B cell (primary cell): ENCODE measurements at regions of chr19 and their contacts with region 1.

Region 1: DNA sequence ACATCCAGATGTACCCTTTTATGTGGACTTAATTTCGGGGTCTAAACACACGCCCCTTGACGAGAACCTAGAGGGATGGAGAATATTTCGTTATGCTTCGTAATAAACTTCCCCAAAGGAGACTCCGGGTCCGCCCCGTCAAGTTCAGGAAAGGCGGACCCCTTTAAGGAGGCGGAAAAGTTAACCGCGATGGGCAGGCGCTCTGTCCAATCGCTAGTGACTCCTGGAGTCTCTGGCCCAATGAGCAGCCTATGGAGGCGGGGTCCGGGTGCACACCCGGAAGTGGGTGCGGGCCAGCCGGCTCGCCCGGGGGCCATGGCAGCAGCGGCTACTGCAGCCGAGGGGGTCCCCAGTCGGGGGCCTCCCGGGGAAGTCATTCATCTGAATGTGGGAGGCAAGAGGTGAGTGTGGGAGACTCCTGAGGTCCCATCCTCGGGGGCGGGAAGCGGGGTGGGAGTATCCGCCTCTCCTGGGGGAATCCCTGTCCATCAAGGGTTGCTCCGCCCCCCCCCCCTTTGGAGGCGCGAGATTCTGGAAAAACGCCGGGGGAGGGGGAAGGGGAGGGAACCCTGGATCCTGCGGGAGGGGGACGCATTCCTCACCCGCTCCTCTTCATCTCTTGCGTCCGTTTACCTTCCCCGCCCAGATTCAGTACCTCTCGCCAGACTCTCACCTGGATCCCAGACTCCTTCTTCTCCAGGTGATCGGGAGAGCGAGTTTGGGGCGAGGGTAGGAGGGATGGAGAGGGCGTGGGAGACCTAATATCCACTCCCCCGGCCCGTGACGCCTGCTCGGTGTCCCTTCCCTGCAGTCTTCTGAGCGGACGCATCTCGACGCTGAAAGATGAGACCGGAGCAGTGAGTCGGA is at the start of gene SHKBP1:
- DNase-seq: peak; percentile 96
- ATAC-seq: peak; percentile 98
- H3K4me3 ChIP-seq: peak within 1 kb of the TSS; percentile 52 to 90 (median 88)
- H3K4me3 Mint-ChIP-seq: peak within 1 kb of the TSS; percentile 83
- H3K27ac ChIP-seq: peak within 1 kb of the TSS; percentile 68 to 77
- H3K27ac Mint-ChIP-seq: peak within 1 kb of the TSS; percentile 89
- H3K4me1 ChIP-seq: peaks cover 18 to 42% of the 10 kb centered on the region in 2 donors
- H3K4me1 Mint-ChIP-seq: peaks cover 34% of the 10 kb centered on the region
- H3K27me3 ChIP-seq: no peaks in the 10 kb centered on the region
- H3K27me3 Mint-ChIP-seq: no peaks in the 10 kb centered on the region
- CTCF ChIP-seq: no peak
- total RNA-seq, gene SHKBP1: 179 and 192 TPM in 2 replicates

Region 2: GRCh38 chr19:39833464-39834286 is 743.1 kb before region 1 on chr19 and contains the start of gene DYRK1B:
- CTCF ChIA-PET with region 1: no interaction called
- POLR2A ChIA-PET with region 1: no interaction called
- intact Hi-C with region 1: loop called (anchors 5 kb)
- DNase-seq: peak; percentile 99
- ATAC-seq: peak; percentile 84
- H3K4me3 ChIP-seq: peak within 1 kb of the TSS; percentile 66 to 100 (median 98)
- H3K4me3 Mint-ChIP-seq: peak within 1 kb of the TSS; percentile 87
- H3K27ac ChIP-seq: peak within 1 kb of the TSS; percentile 94 to 99
- H3K27ac Mint-ChIP-seq: peak within 1 kb of the TSS; percentile 92
- H3K4me1 ChIP-seq: peaks cover 16 to 26% of the 10 kb centered on the region in 2 donors
- H3K4me1 Mint-ChIP-seq: peaks cover 32% of the 10 kb centered on the region
- H3K27me3 ChIP-seq: no peaks in the 10 kb centered on the region
- H3K27me3 Mint-ChIP-seq: no peaks in the 10 kb centered on the region
- CTCF ChIP-seq: no peak
- total RNA-seq, gene DYRK1B: 36.6 and 44.4 TPM in 2 replicates

Region 3: DNA sequence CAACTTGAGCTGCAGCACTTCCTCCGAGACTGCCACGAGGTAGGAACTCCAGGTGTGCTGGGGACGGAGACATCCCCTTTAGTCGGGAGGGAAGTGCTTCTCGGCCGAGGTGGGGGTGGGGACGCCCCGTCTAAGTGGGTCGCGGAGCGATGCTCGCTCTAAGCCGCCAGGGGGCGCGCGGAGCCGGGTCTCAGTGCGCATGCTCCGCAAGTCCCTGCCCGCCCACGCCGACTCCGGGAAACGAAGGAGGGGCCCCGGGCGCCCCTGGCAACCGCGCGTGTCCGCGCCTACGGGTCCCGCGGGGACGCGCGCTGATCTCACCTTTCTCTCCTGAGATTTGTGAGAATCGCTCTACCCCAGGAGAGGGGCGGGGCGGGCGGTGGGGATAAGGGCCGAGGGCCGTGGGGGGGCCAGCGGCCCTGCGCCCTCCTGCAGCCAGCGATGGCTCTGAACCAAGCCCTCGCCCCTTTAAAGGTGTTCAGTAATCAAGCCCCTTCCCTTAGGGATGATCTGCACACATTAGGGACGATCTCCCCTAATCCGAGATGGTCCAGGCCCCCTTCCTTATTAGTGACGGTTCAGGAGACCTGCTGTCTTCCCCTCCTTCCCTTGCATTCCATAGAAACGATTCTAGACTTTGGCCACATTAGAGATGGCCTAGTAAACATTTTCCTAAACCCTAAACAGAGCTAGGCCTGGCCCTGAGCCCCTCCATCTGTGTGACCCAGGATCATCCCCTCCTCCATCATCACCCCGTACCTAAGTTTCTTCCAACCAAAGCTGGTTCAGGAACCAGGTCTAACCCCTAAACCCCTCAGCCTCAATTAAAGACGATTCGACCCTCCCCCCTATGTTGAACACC is 47.5 kb before region 1 on chr19:
- CTCF ChIA-PET with region 1: no interaction called
- POLR2A ChIA-PET with region 1: no interaction called
- intact Hi-C with region 1: loop called (anchors 1 kb)
- DNase-seq: peak; percentile 95
- ATAC-seq: peak; percentile 91
- H3K4me3 ChIP-seq: peak overlapping the region; percentile 9 to 69 (median 41)
- H3K4me3 Mint-ChIP-seq: peak overlapping the region; percentile 82
- H3K27ac ChIP-seq: no peak overlapping the region
- H3K27ac Mint-ChIP-seq: peak overlapping the region; percentile 64
- H3K4me1 ChIP-seq: peaks cover 13 to 14% of the 10 kb centered on the region in 2 donors
- H3K4me1 Mint-ChIP-seq: peaks cover 13% of the 10 kb centered on the region
- H3K27me3 ChIP-seq: peaks cover 0 to 35% (median 18%) of the 10 kb centered on the region in 4 experiments
- H3K27me3 Mint-ChIP-seq: peaks cover 44% of the 10 kb centered on the region
- CTCF ChIP-seq: peak; percentile 91

Region 4: DNA sequence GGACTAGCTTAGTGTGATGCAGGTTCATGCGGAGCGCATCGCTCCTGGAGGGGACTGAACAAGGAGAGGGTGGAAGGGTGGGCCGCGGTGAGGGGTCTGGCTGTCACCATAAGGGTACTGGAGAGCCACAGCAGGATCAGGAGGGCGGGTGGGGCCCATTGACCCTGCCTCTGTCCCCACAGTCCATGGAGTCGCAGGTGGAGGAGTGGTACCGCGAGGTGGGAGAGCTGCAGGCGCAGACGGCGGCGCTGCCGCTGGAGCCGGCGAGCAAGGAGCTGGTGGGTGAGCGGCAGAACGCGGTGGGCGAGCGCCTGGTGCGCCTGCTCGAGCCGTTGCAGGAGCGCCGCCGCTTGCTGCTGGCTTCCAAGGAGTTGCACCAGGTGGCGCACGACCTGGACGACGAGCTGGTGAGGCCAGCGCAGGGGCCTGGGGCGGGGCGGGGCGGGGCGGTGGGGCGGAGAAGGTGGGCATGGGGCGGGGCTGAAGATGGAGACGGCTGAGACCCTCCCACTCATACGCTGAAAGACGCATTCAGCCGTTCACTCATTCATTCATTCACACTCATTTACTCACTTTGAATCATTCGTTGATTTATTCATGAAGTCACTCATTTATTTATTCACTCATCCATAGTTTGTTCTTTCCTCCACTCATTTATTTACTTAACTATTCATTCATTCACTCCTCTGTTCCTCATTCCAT is 27.7 kb before region 1 on chr19:
- CTCF ChIA-PET with region 1: no interaction called
- POLR2A ChIA-PET with region 1: no interaction called
- intact Hi-C with region 1: no loop called
- DNase-seq: peak; percentile 70
- ATAC-seq: peak; percentile 82
- H3K4me3 ChIP-seq: no peak overlapping the region
- H3K4me3 Mint-ChIP-seq: no peak overlapping the region
- H3K27ac ChIP-seq: no peak overlapping the region
- H3K27ac Mint-ChIP-seq: peak overlapping the region; percentile 22
- H3K4me1 ChIP-seq: peaks cover 4% of the 10 kb centered on the region in 2 donors
- H3K4me1 Mint-ChIP-seq: peaks cover 10% of the 10 kb centered on the region
- H3K27me3 ChIP-seq: peaks cover 0 to 49% (median 28%) of the 10 kb centered on the region in 4 experiments
- H3K27me3 Mint-ChIP-seq: peaks cover 48% of the 10 kb centered on the region
- CTCF ChIP-seq: peak; percentile 55

Region 5: GRCh38 chr19:40778706-40779284 is 202.0 kb after region 1 on chr19:
- CTCF ChIA-PET with region 1: no interaction called
- POLR2A ChIA-PET with region 1: no interaction called
- intact Hi-C with region 1: no loop called
- DNase-seq: no peak
- ATAC-seq: no peak
- H3K4me3 ChIP-seq: peak overlapping the region; percentile 67 to 91 (median 81)
- H3K4me3 Mint-ChIP-seq: peak overlapping the region; percentile 99
- H3K27ac ChIP-seq: peak overlapping the region; percentile 97 to 99
- H3K27ac Mint-ChIP-seq: peak overlapping the region; percentile 99
- H3K4me1 ChIP-seq: peaks cover 42 to 57% of the 10 kb centered on the region in 2 donors
- H3K4me1 Mint-ChIP-seq: peaks cover 65% of the 10 kb centered on the region
- H3K27me3 ChIP-seq: no peaks in the 10 kb centered on the region
- H3K27me3 Mint-ChIP-seq: no peaks in the 10 kb centered on the region
- CTCF ChIP-seq: no peak